ENCODE measurements at regions of chr7 and their contacts with region 1.

Region 1: GRCh38 chr7:117405519-117405918 is 21.8 kb downstream of the ASZ1 start:
- DNase-seq: no peak
- H3K4me3 ChIP-seq: no peak overlapping the region
- H3K27ac ChIP-seq: no peak overlapping the region
- H3K4me1 ChIP-seq: no peaks in the 10 kb centered on the region
- H3K27me3 ChIP-seq: no peaks in the 10 kb centered on the region
- CTCF ChIP-seq: no peak

Region 2: DNA sequence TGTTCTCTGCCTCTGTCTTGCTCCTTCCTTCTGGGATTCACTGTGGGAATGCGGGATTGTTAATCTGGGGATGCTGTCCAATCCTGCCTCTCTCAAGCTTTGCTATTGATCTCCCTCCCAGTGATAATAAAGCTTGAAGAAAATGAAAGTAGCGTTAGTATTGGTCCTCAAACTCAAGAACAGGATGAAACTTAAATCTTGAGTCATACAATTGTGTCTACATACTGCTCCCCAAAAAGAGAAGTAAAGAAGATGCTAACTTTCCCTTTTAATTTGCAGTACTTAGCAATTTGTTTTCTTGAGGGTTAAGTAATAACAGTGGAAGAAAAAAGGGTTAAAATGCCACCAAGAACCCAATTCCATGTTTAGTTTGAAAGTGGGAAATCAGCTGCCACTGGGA is 87.9 kb after region 1 on chr7:
- intact Hi-C with region 1: no loop called
- DNase-seq: no peak
- H3K4me3 ChIP-seq: no peak overlapping the region
- H3K27ac ChIP-seq: no peak overlapping the region
- H3K4me1 ChIP-seq: peaks cover 3% of the 10 kb centered on the region
- H3K27me3 ChIP-seq: no peaks in the 10 kb centered on the region
- CTCF ChIP-seq: no peak

Region 3: DNA sequence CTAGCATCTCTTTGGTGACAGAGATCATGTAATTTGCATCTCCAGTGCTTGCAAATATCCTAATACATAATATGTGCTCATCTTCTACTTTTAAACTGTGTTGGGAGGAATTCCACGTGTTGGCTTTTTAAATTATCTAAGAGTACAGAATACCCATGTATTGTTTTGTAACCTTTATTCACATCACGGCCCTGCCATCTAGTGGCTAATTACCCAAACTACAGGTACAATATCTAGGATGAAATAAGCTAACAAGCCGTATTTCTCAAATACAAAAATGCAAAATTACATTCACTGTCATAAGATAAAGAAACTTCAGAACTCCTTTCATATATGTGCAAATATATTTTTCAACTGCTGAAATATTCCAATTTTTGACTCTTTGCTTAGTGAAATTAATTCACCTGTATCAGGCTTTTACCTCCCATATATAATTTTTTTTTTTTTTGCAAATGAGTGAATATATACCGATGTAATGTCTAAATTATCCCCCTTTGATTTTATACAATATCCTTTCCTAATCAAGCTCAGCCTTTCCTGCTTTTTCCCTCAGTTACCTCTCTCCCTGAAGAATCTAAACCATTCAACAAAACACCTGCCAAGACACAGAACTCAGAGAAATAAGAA is 748.1 kb after region 1 on chr7:
- intact Hi-C with region 1: loop called (anchors 5 kb)
- DNase-seq: peak; percentile 36
- H3K4me3 ChIP-seq: no peak overlapping the region
- H3K27ac ChIP-seq: no peak overlapping the region
- H3K4me1 ChIP-seq: no peaks in the 10 kb centered on the region
- H3K27me3 ChIP-seq: no peaks in the 10 kb centered on the region
- CTCF ChIP-seq: peak; percentile 53